Sigmoid colon (tissue), 7 donors: ENCODE measurements at regions of chr6 and their contacts with region 1.

Region 1: GRCh38 chr6:167485186-167485978 is 160.5 kb downstream of the TTLL2 start:
- DNase-seq: no peak
- H3K4me3 ChIP-seq: no peak overlapping the region
- H3K27ac ChIP-seq: no peak overlapping the region
- H3K4me1 ChIP-seq: no peaks in the 10 kb centered on the region
- H3K27me3 ChIP-seq: no peaks in the 10 kb centered on the region
- CTCF ChIP-seq: peak; percentile 23 to 43 (median 24)
- EP300 ChIP-seq: no peak
- POLR2A ChIP-seq: no peak

Region 2: GRCh38 chr6:167898673-167899311 is 413.4 kb after region 1 on chr6:
- intact Hi-C with region 1: loop called (anchors 2 kb)
- DNase-seq: no peak
- H3K4me3 ChIP-seq: no peak overlapping the region
- H3K27ac ChIP-seq: no peak overlapping the region
- H3K4me1 ChIP-seq: no peaks in the 10 kb centered on the region
- H3K27me3 ChIP-seq: no peaks in the 10 kb centered on the region
- CTCF ChIP-seq: peak; percentile 53 to 73 (median 68)
- EP300 ChIP-seq: no peak
- POLR2A ChIP-seq: no peak

Region 3: GRCh38 chr6:168686831-168687730 is 1201.7 kb after region 1 on chr6:
- intact Hi-C with region 1: no loop called
- DNase-seq: no peak
- H3K4me3 ChIP-seq: no peak overlapping the region
- H3K27ac ChIP-seq: no peak overlapping the region
- H3K4me1 ChIP-seq: no peaks in the 10 kb centered on the region
- H3K27me3 ChIP-seq: no peaks in the 10 kb centered on the region
- CTCF ChIP-seq: no peak
- EP300 ChIP-seq: no peak
- POLR2A ChIP-seq: no peak